ENCODE measurements at regions of chr1 and their contacts with region 1.

Region 1: DNA sequence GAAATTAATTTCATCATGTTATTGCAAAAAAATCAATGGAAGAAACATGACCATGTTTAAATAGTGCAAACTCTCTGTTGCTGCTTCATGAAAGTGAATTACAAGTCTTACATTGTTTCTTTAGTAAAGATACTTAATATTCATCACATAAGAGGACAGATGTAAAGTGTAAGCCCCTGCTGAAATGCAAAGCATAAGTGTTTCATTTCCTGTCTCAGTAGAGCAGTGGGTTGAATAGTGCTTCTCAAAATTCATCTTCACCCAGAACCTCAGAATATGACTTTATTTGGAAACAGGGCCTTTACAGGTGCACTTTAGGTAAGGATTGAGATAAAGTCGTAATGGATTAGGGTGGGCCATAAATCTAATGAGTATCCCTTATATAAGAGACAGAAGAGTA is 738.4 kb upstream of the RGS18 start:
- DNase-seq: no peak
- ATAC-seq: no peak
- H3K4me3 ChIP-seq: no peak overlapping the region
- H3K27ac ChIP-seq: no peak overlapping the region
- H3K4me1 ChIP-seq: no peaks in the 10 kb centered on the region
- H3K27me3 ChIP-seq: no peaks in the 10 kb centered on the region
- CTCF ChIP-seq: no peak
- POLR2A ChIP-seq: no peak
- RAD21 ChIP-seq: no peak

Region 2: GRCh38 chr1:191388253-191388652 is 31.6 kb before region 1 on chr1:
- CTCF ChIA-PET with region 1: interaction called, 11 read pairs
- POLR2A ChIA-PET with region 1: no interaction called
- dilution Hi-C with region 1: no loop called
- in situ Hi-C with region 1: no loop called
- intact Hi-C with region 1: no loop called
- DNase-seq: no peak
- ATAC-seq: no peak
- H3K4me3 ChIP-seq: no peak overlapping the region
- H3K27ac ChIP-seq: no peak overlapping the region
- H3K4me1 ChIP-seq: no peaks in the 10 kb centered on the region
- H3K27me3 ChIP-seq: no peaks in the 10 kb centered on the region
- CTCF ChIP-seq: no peak
- POLR2A ChIP-seq: no peak
- RAD21 ChIP-seq: no peak

Region 3: DNA sequence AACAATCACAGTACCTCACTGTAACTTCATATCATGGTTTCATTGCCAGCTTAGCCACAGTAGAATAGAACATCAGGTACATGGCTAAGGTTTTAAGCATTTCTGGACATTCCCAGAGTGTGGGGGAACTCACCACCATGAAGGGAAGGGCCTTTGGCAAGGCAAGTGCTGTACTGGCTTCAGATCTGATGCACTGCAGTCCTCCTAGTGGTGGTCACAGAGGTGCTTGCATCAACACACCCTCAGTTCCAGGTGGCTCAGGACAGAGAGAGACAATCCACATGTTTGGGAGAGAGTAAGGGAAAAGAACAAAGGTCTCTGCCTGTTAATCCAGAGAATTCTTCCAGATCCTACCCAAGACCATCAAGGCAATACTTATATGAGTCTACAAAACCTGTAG is 210.0 kb after region 1 on chr1:
- CTCF ChIA-PET with region 1: no interaction called
- POLR2A ChIA-PET with region 1: no interaction called
- dilution Hi-C with region 1: no loop called
- in situ Hi-C with region 1: no loop called
- intact Hi-C with region 1: no loop called
- DNase-seq: no peak
- ATAC-seq: no peak
- H3K4me3 ChIP-seq: no peak overlapping the region
- H3K27ac ChIP-seq: no peak overlapping the region
- H3K4me1 ChIP-seq: no peaks in the 10 kb centered on the region
- H3K27me3 ChIP-seq: no peaks in the 10 kb centered on the region
- CTCF ChIP-seq: no peak
- POLR2A ChIP-seq: no peak
- RAD21 ChIP-seq: no peak